ENCODE measurements at regions of chr2 and their contacts with region 1.

Region 1: GRCh38 chr2:20578895-20579825 is 71.7 kb downstream of the HS1BP3 start:
- DNase-seq: peak; percentile 48
- H3K4me3 ChIP-seq: no peak overlapping the region
- H3K27ac ChIP-seq: peak overlapping the region; percentile 70 to 73
- H3K4me1 ChIP-seq: no peaks in the 10 kb centered on the region
- H3K27me3 ChIP-seq: no peaks in the 10 kb centered on the region
- CTCF ChIP-seq: no peak
- POLR2A ChIP-seq: no peak

Region 2: DNA sequence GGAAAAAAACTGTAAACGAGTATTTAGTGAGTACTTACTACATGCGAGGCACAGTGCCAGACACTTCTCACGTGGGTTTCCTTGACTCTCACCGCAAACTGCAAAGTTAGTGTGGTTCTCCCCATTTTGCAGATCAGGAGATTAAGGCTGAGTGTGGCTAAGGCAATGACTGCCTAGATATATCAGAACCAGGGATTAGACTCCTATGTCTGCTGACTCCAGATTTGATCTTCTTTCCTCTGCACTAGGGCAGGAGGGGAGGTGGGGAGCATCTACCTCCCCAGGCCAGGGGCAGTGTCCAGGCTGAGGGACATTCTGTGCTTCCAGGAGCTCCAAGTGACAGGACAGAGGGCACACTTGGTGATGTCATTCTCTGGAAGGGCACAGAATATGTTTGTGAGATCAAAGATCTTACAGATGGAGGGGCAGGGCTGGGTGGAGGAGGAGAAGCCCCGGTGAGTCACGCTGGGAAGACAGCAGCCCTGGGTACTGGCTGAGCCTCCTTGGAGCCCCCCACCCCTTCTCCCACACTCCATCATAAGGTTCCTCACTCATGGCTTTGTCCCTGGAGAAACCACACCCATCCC is 39.9 kb before region 1 on chr2:
- intact Hi-C with region 1: loop called (anchors 5 kb)
- DNase-seq: no peak
- H3K4me3 ChIP-seq: no peak overlapping the region
- H3K27ac ChIP-seq: peak overlapping the region; percentile 68 to 80
- H3K4me1 ChIP-seq: peaks cover 12% of the 10 kb centered on the region
- H3K27me3 ChIP-seq: no peaks in the 10 kb centered on the region
- CTCF ChIP-seq: no peak
- POLR2A ChIP-seq: no peak

Region 3: GRCh38 chr2:20737505-20737904 is 158.3 kb after region 1 on chr2:
- intact Hi-C with region 1: no loop called
- DNase-seq: no peak
- H3K4me3 ChIP-seq: no peak overlapping the region
- H3K27ac ChIP-seq: no peak overlapping the region
- H3K4me1 ChIP-seq: no peaks in the 10 kb centered on the region
- H3K27me3 ChIP-seq: no peaks in the 10 kb centered on the region
- CTCF ChIP-seq: no peak
- POLR2A ChIP-seq: no peak

Measured in prostate gland (tissue), 2 donors.